Vagina (tissue), 2 donors: ENCODE measurements at regions of chr2 and their contacts with region 1.

Region 1: GRCh38 chr2:68441179-68441993 is 25.7 kb downstream of the FBXO48 start:
- DNase-seq: no peak
- H3K4me3 ChIP-seq: no peak overlapping the region
- H3K27ac ChIP-seq: no peak overlapping the region
- H3K4me1 ChIP-seq: peaks cover 7% of the 10 kb centered on the region
- H3K27me3 ChIP-seq: no peaks in the 10 kb centered on the region
- CTCF ChIP-seq: peak; percentile 83 to 97 (median 94)
- POLR2A ChIP-seq: no peak

Region 2: DNA sequence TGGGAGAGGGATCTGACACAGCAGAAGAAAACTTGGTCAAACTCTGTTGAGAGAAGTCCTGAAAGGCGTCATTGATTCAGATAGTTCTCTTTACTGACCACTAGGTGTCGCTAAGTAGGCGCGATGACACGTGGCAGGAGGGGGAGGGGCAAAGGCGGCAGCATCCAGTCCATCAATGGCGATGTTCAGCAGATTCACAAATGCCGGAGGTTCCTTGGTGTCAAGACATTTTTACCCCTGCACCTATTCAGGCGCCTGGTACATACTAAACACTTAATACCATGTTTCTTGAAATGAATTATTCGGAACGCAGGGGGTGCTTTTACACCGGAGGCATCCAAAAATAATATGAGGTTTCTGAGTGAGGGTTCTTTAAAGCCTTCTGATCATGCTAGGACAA is 79.3 kb before region 1 on chr2:
- intact Hi-C with region 1: loop called (anchors 5 kb)
- DNase-seq: no peak
- H3K4me3 ChIP-seq: no peak overlapping the region
- H3K27ac ChIP-seq: no peak overlapping the region
- H3K4me1 ChIP-seq: no peaks in the 10 kb centered on the region
- H3K27me3 ChIP-seq: no peaks in the 10 kb centered on the region
- CTCF ChIP-seq: peak in 1 of 3 experiments; percentile 74
- POLR2A ChIP-seq: no peak